ENCODE measurements at regions of chr1 and their contacts with region 1.

Region 1: GRCh38 chr1:164071288-164071687 is 487.7 kb upstream of the PBX1 start:
- DNase-seq: no peak
- ATAC-seq: no peak
- H3K4me3 ChIP-seq: no peak overlapping the region
- H3K4me1 ChIP-seq: no peaks in the 10 kb centered on the region
- CTCF ChIP-seq: no peak

Region 2: DNA sequence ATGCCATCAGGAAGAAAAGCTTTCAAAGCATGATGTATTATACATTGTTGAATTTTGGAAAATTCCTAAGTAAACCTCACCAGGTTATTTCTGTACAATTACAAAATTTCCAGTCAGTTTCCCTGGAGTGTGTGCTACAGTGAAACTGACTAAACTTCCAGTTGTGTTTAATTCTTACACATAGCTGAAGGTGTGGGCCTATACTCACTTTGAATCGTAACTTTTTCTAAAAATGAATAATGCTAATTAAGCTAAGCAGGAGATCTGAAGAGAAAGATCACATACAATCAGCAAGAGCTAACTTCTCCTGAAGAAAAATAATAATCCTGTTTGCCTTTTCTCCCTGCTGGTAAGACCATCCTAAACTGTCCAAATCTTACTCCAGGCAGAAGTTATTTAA is 49.5 kb before region 1 on chr1:
- intact Hi-C with region 1: loop called in 1 of 2 experiments (anchors 5 kb)
- DNase-seq: no peak
- ATAC-seq: no peak
- H3K4me3 ChIP-seq: no peak overlapping the region
- H3K4me1 ChIP-seq: no peaks in the 10 kb centered on the region
- CTCF ChIP-seq: no peak

Measured in mucosa of descending colon (tissue), 3 donors.